PC-9 (cell line): ENCODE measurements at regions of chr1 and their contacts with region 1.

Region 1: DNA sequence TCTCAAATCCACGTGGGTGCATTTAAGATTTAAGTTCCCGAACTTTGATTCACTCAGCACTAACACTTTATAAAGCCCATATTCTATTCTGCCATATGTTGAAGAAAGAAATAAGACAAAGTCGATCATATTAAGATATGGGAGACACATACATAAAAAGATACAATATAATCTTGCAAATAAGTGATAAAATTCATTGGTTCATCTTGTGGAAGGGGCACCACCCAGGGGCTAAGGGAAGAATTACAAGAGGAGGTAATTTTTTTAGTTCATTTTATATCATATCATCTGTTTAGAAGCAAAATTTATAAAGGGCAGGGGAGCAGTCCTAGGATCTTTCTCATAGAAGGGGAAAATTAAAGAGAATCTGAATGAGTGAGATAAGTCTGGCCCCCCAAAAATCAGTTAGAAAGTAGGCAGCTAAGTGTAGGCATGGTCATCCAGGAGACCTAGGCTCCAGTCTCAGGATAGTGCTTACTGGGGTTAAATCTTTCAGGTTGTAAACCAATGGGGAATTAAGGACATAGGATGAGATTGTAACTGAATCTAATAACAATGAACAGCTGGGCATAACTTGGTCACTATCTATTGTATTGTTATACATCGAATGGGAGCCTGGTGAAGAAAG is 124.2 kb upstream of the L1TD1 start:
- DNase-seq: no peak
- H3K4me3 ChIP-seq: no peak overlapping the region
- H3K27ac ChIP-seq: no peak overlapping the region
- H3K4me1 ChIP-seq: no peaks in the 10 kb centered on the region
- H3K27me3 ChIP-seq: no peaks in the 10 kb centered on the region
- CTCF ChIP-seq: peak; percentile 70

Region 2: DNA sequence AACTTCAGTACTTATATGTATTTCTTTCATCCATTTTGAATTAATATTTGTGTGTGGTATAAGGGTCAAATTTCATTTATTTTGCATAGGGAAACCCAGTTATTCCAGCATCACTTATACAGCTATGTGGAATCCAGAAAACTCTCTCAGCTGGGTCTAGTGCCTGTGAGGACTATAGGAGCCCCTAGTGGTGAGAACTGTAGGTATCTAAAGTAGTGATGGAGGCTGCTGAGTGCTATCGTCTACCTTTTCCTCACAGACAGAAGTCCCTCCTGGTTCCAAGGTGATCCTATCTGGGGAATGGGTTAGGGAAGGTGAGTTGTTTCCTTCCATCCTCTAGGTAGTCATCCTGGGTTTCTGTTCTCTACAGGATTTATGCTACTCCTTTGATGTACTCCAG is 1645.0 kb before region 1 on chr1:
- CTCF ChIA-PET with region 1: no interaction called
- POLR2A ChIA-PET with region 1: interaction called, 13 read pairs
- intact Hi-C with region 1: no loop called
- DNase-seq: no peak
- H3K4me3 ChIP-seq: no peak overlapping the region
- H3K27ac ChIP-seq: no peak overlapping the region
- H3K4me1 ChIP-seq: no peaks in the 10 kb centered on the region
- H3K27me3 ChIP-seq: no peaks in the 10 kb centered on the region
- CTCF ChIP-seq: peak; percentile 59

Region 3: GRCh38 chr1:61931587-61932279 is 138.8 kb before region 1 on chr1:
- CTCF ChIA-PET with region 1: no interaction called
- POLR2A ChIA-PET with region 1: no interaction called
- intact Hi-C with region 1: loop called (anchors 5 kb)
- DNase-seq: no peak
- H3K4me3 ChIP-seq: no peak overlapping the region
- H3K27ac ChIP-seq: no peak overlapping the region
- H3K4me1 ChIP-seq: no peaks in the 10 kb centered on the region
- H3K27me3 ChIP-seq: no peaks in the 10 kb centered on the region
- CTCF ChIP-seq: no peak